Activated T-helper 1 cell treated with anti-CD3 and anti-CD28 coated beads, Interleukin-12 subunit alpha, Interleukin-12 subunit beta, Interleukin-2, Interleukin-4 antibody, amounts not matched to agents 30 ng/mL and 10 ng/mL and 1 ng/mL, durations not matched to agents 14 hours and 24 hours and 36 hours (primary cell): ENCODE measurements at regions of chr3 and their contacts with region 1.

Region 1: GRCh38 chr3:4493014-4493940 is at the start of gene ITPR1:
- DNase-seq: peak; percentile 97
- H3K4me3 Mint-ChIP-seq: peak within 1 kb of the TSS; percentile 96
- H3K27ac Mint-ChIP-seq: peak within 1 kb of the TSS; percentile 83
- H3K4me1 Mint-ChIP-seq: peaks cover 59% of the 10 kb centered on the region
- H3K27me3 Mint-ChIP-seq: peaks cover 35% of the 10 kb centered on the region
- total RNA-seq, gene ITPR1: 108 and 113 TPM in 2 replicates

Region 2: DNA sequence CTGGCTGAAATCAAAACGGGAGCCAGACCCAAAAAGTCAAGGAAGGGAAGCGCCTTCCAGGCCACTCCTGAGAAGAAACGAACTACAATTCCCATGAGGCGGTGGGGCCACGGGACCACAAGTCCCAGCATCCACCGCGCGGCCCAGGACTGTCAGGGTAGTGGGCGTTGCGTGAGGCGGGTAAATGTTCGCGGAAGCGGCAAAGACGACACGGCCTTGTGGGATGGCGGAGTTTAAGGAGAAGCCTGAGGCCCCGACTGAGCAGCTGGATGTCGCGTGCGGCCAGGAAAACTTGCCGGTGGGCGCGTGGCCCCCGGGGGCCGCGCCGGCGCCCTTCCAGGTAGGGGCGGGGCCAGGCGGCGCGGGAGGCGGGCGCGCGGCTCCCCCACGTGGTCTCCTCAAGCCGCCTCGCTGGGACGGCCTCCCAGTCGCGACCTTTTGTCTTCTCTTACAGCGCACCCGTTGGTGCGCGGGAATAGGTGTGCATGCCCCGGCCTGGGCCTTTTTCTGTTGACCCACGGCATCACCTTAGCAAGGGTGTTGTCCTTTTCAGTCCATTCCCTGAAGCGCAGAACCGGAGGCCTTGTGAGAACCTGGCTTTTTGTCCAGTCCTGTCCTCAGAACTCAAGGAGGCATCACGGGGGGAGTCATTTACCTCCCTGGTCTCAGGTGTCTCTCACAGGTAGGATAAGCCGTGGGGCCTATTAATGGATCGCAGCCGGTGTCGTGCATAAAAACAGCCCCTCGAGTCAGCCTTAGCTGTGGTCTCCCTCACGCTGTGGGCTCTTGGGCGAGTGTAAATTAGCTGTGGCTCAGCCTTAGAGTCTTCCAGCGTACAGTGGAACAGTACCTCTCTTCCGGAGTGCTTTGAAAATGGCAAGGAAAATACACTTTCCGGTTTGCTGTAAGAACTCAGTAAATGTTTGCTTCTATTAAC is 189.8 kb before region 1 on chr3 and contains the start of gene SETMAR:
- intact Hi-C with region 1: loop called (anchors 1 kb)
- DNase-seq: peak; percentile 75
- H3K4me3 Mint-ChIP-seq: peak within 1 kb of the TSS; percentile 93
- H3K27ac Mint-ChIP-seq: peak within 1 kb of the TSS; percentile 99
- H3K4me1 Mint-ChIP-seq: peaks cover 23% of the 10 kb centered on the region
- H3K27me3 Mint-ChIP-seq: no peaks in the 10 kb centered on the region
- total RNA-seq, gene SETMAR: 17.8 and 18.7 TPM in 2 replicates

Region 3: DNA sequence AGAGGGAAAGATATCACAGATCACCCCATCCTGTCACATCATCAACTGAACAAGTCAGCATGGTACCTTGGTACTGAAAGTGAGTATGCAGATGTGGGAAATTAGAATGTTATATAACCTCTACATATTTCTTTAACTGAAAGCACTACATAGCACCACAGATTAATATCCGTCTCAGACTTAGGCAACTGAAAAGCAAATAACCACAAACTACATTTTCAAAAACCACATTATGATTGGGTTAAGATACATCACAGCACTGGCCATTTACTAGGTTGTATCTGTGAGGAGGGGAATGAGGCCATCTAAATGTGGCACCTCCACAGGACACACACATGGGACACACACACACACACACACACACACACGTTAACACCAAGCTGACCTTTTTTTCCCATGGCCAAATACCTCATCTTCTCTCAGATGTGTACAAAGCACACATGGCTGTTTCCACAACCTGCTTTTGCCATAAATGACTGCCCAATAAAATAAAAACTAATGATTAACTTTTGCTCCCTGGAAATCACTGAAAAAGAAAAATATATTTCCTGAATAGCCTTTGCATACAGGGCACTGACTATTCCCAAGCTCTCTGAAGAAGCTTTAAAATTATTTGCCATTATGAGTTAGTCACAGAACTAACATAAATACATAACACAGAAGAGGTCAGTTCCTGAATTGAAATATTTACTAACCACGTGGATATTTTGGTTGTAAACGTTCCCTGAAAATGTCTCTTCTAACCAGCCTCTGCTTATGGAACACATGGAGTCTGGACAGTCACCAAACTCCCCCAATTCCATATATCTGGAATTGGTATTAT is 86.3 kb before region 1 on chr3:
- intact Hi-C with region 1: loop called (anchors 1 kb)
- DNase-seq: no peak
- H3K4me3 Mint-ChIP-seq: no peak overlapping the region
- H3K27ac Mint-ChIP-seq: no peak overlapping the region
- H3K4me1 Mint-ChIP-seq: peaks cover 57% of the 10 kb centered on the region
- H3K27me3 Mint-ChIP-seq: peaks cover 1% of the 10 kb centered on the region

Region 4: GRCh38 chr3:4474683-4475490 is 18.4 kb before region 1 on chr3:
- intact Hi-C with region 1: loop called (anchors 2 kb)
- DNase-seq: peak; percentile 9
- H3K4me3 Mint-ChIP-seq: peak overlapping the region; percentile 8
- H3K27ac Mint-ChIP-seq: peak overlapping the region; percentile 62
- H3K4me1 Mint-ChIP-seq: peaks cover 17% of the 10 kb centered on the region
- H3K27me3 Mint-ChIP-seq: peaks cover 22% of the 10 kb centered on the region

Region 5: DNA sequence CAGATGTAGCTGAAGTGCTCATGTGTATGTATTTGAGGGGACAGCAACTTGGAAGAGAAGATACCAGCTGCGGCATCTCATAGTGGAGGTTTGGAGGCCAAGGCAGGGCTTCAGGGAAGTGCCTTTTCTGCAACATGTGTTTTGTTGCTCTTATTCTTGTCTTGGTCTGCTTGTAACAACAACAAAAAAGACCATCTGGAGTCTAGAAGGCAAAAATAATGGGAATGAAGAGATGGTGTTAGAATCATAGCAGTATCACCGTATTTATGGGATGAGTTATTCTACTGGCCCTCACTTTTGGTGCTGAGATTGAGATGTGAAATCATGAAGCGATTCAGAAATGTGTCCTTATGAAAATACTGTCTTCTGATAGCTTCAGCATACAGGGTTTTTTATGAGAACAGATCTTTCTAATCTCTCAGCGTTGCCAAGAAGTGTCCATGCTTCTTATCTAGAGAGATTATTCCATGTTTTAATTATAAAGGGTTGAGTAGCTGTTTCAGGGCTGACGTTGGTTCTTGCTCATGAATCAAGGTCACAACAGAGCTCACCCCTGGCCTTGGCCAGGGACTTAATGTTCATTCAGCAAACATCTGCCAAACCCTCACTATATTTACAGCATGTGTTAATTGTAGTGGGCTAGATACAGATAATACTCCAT is 57.9 kb after region 1 on chr3:
- intact Hi-C with region 1: no loop called
- DNase-seq: no peak
- H3K4me3 Mint-ChIP-seq: no peak overlapping the region
- H3K27ac Mint-ChIP-seq: no peak overlapping the region
- H3K4me1 Mint-ChIP-seq: peaks cover 9% of the 10 kb centered on the region
- H3K27me3 Mint-ChIP-seq: no peaks in the 10 kb centered on the region

Region 6: DNA sequence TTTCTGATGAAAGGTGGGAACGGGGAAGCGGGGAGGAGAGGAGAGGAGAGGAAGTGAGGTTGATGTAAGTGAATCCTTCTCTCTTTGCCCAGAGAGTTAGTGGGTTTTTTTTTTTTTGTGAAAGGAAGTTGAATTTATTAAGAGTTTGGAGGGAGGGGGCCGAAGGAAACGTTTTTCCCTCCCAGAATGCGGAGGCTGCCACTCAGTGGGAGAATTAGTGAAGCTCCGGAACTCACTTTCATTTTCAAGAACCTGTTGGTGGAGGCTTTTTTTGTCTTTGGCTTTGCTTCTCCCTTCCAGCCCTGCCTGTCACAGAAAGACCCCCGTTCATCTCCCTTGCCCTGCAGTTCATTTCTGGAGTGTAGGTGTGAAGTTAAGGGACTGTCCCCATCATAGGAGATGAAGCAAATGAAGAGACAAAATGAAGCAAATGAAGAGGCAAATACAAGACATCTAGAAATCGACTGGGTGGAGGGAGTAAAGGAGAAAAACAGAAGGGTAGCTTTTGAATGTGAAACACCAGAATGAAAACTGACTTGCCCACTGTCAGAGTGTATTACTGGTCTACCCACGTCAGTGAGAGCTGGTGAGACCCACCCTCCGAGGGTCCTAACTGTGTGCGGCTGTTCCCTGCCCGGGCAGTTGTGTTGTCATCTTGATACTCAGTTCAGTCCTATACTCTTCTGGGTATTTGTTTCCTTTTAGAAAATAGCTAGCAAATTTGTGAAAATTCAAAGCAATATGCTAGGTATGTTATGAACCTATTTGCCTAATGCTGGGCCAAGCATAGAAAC is 91.4 kb after region 1 on chr3:
- intact Hi-C with region 1: loop called (anchors 2 kb)
- DNase-seq: no peak
- H3K4me3 Mint-ChIP-seq: peak overlapping the region; percentile 74
- H3K27ac Mint-ChIP-seq: peak overlapping the region; percentile 42
- H3K4me1 Mint-ChIP-seq: peaks cover 41% of the 10 kb centered on the region
- H3K27me3 Mint-ChIP-seq: no peaks in the 10 kb centered on the region

Region 7: GRCh38 chr3:4850928-4851265 is 357.6 kb after region 1 on chr3:
- intact Hi-C with region 1: loop called (anchors 5 kb)
- DNase-seq: peak; percentile 56
- H3K4me3 Mint-ChIP-seq: peak overlapping the region; percentile 67
- H3K27ac Mint-ChIP-seq: peak overlapping the region; percentile 99
- H3K4me1 Mint-ChIP-seq: peaks cover 85% of the 10 kb centered on the region
- H3K27me3 Mint-ChIP-seq: no peaks in the 10 kb centered on the region

Region 8: DNA sequence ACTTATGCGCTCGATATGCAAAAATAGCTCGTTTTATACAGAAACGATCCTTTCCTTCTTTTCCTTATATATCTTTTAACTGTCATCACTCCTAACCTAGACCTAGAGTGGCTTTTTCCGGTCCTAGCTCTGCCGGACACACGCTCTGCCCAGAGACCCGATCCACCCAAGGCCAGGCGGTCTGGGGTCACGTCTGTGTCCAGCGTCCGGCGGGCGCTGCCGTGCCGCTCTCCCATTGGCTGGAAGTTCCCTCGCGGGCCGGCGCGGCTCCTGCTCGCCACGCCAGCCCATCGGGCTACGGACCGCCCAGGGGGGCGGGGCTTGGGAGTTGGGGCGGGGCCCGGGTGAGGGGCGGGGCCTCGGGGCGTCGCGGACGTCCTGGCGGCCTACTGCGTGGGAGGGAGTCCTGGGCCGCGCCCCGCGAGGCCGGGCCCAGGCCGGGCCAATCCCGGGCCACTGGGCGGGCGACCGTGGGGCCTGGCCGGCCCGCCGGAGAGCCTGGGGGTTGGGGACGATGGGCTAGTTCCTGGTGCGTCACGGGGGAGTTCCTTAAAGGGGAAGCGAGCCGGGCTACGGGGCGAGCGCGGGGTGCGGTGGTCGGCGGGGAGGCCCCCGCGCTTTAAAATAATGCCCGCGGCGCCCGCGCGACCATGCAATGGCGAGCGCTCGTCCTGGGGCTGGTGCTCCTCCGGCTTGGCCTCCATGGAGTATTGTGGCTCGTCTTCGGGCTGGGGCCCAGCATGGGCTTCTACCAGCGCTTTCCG is 694.1 kb after region 1 on chr3 and contains the start of gene EDEM1:
- intact Hi-C with region 1: loop called (anchors 1 kb)
- DNase-seq: peak; percentile 96
- H3K4me3 Mint-ChIP-seq: peak within 1 kb of the TSS; percentile 93
- H3K27ac Mint-ChIP-seq: peak within 1 kb of the TSS; percentile 98
- H3K4me1 Mint-ChIP-seq: peaks cover 39% of the 10 kb centered on the region
- H3K27me3 Mint-ChIP-seq: no peaks in the 10 kb centered on the region
- total RNA-seq, gene EDEM1: 169 and 192 TPM in 2 replicates